A549 (cell line): ENCODE measurements at regions of chr9 and their contacts with region 1.

Region 1: DNA sequence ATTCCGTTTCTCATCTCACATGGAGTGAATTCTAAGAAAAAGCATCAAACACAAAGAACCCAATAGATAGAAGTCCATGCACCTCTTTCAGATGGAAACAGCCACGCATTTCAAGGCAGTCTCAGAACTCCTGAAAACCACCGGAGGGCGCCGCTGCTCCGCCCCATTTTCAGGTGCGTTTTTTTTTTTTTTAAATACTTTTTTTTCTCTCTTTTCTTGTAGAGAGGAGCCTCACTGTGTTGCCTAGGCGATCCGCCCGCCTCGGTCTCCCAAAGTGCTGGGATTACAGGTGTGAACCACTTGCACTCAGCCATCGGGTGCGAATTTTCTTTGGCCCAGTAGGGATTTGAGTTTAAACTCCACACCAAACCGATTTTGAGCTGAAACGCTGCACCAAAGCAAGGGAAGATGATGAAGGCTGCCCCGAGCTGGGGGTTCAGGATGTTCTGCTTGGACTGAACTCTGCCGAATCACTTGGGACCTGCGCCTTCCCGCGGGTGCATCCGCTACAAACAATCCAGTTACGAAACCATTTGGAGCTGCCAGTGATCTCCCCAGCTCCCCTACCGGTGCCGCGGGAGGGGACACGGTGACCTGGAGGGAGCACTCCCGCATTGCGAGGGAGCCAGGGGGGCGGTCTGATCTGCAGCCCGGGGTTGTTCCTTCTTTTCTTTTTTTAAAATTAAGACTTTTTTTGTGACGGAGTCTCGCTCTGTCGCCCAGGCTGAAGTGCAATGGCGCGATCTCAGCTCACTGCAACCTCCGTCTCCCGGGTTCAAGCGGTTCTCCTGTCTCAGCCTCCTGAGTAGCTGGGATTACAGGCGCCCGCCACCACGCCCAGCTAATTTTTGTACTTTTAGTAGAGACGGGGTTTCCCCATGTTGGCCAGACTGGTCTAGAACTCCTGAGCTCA is 1.4 kb downstream of the PTGR1 start:
- DNase-seq: peak; percentile 58 to 78
- ATAC-seq: peak; percentile 11 to 43; a peak in 5 of 6 replicates
- H3K4me3 ChIP-seq: peak overlapping the region; percentile 96
- H3K27ac ChIP-seq: peak overlapping the region; percentile 92 to 94
- H3K4me1 ChIP-seq: peaks cover 75% of the 10 kb centered on the region
- CTCF ChIP-seq: peak; percentile 87
- EP300 ChIP-seq: no peak
- POLR2A ChIP-seq: no peak
- RAD21 ChIP-seq: peak; percentile 80 to 86

Region 2: DNA sequence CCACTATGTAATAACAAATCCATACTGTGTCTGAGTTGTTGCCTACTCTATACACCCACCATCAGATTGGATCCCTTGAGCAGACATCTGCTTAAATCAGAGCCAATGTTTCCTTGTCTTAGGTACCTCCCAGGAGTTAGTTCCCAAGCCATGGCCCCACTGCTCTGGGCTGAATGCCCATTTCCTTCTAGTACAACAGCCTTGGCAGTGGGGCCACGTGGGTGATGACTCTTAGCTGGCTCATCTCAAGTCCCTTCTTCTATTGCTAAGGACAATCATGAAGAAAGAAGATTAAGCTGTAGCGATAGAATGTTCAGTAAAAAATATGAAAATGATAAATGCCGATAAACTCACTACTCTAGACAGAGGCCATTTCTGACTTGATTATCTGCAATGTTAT is 15.2 kb before region 1 on chr9:
- CTCF ChIA-PET with region 1: interaction called, 12 read pairs
- POLR2A ChIA-PET with region 1: interaction called, 5 read pairs
- DNase-seq: peak in 1 of 2 experiments; percentile 55
- ATAC-seq: peak; percentile 40 to 62; a peak in 5 of 6 replicates
- H3K4me3 ChIP-seq: no peak overlapping the region
- H3K27ac ChIP-seq: no peak overlapping the region
- H3K4me1 ChIP-seq: peaks cover 14% of the 10 kb centered on the region; the same call in 1 of the 3 replicates
- CTCF ChIP-seq: no peak
- EP300 ChIP-seq: no peak
- POLR2A ChIP-seq: no peak
- RAD21 ChIP-seq: no peak

Region 3: GRCh38 chr9:111621895-111622480 is 23.9 kb after region 1 on chr9:
- CTCF ChIA-PET with region 1: interaction called, 112 read pairs
- POLR2A ChIA-PET with region 1: interaction called, 21 read pairs
- DNase-seq: peak; percentile 49 to 61
- ATAC-seq: peak; percentile 90 to 98
- H3K4me3 ChIP-seq: no peak overlapping the region
- H3K27ac ChIP-seq: peak overlapping the region; percentile 49 to 70
- H3K4me1 ChIP-seq: peaks cover 17% of the 10 kb centered on the region
- CTCF ChIP-seq: peak; percentile 80
- EP300 ChIP-seq: no peak
- POLR2A ChIP-seq: no peak
- RAD21 ChIP-seq: peak; percentile 77 to 86

Region 4: GRCh38 chr9:111691672-111692329 is 93.7 kb after region 1 on chr9:
- CTCF ChIA-PET with region 1: interaction called, 13 read pairs
- POLR2A ChIA-PET with region 1: no interaction called
- DNase-seq: peak; percentile 16 to 66
- ATAC-seq: peak; percentile 50 to 78; a peak in 3 of 6 replicates
- H3K4me3 ChIP-seq: no peak overlapping the region
- H3K27ac ChIP-seq: peak overlapping the region in 1 of 2 experiments; percentile 30; a peak in 1 of 6 replicates
- H3K4me1 ChIP-seq: peaks cover 9% of the 10 kb centered on the region; the same call in 2 of the 3 replicates
- CTCF ChIP-seq: peak; percentile 66
- EP300 ChIP-seq: no peak
- POLR2A ChIP-seq: no peak
- RAD21 ChIP-seq: peak; percentile 75 to 76

Region 5: GRCh38 chr9:112233768-112234167 is 635.7 kb after region 1 on chr9:
- CTCF ChIA-PET with region 1: no interaction called
- POLR2A ChIA-PET with region 1: no interaction called
- DNase-seq: peak in 1 of 2 experiments; percentile 21
- ATAC-seq: no peak
- H3K4me3 ChIP-seq: no peak overlapping the region
- H3K27ac ChIP-seq: peak overlapping the region in 1 of 2 experiments; percentile 56; a peak in 2 of 6 replicates
- H3K4me1 ChIP-seq: peaks cover 26% of the 10 kb centered on the region
- CTCF ChIP-seq: no peak
- EP300 ChIP-seq: no peak
- POLR2A ChIP-seq: no peak
- RAD21 ChIP-seq: no peak